B cell (primary cell): ENCODE measurements at regions of chr1 and their contacts with region 1.

Region 1: GRCh38 chr1:48817505-48818114 is 40.9 kb upstream of the BEND5 start:
- DNase-seq: peak; percentile 71
- ATAC-seq: peak; percentile 66
- H3K4me3 ChIP-seq: no peak overlapping the region
- H3K4me3 Mint-ChIP-seq: no peak overlapping the region
- H3K27ac ChIP-seq: no peak overlapping the region
- H3K27ac Mint-ChIP-seq: no peak overlapping the region
- H3K4me1 ChIP-seq: peaks cover 9 to 20% of the 10 kb centered on the region in 2 donors
- H3K4me1 Mint-ChIP-seq: peaks cover 20% of the 10 kb centered on the region
- H3K27me3 ChIP-seq: no peaks in the 10 kb centered on the region
- H3K27me3 Mint-ChIP-seq: no peaks in the 10 kb centered on the region
- CTCF ChIP-seq: peak; percentile 73

Region 2: GRCh38 chr1:48498096-48498791 is 319.4 kb before region 1 on chr1:
- CTCF ChIA-PET with region 1: interaction called, 8 read pairs
- POLR2A ChIA-PET with region 1: no interaction called
- intact Hi-C with region 1: loop called (anchors 1 kb)
- DNase-seq: peak; percentile 68
- ATAC-seq: peak; percentile 62
- H3K4me3 ChIP-seq: no peak overlapping the region
- H3K4me3 Mint-ChIP-seq: no peak overlapping the region
- H3K27ac ChIP-seq: no peak overlapping the region
- H3K27ac Mint-ChIP-seq: no peak overlapping the region
- H3K4me1 ChIP-seq: peaks cover 0 to 5% of the 10 kb centered on the region in 2 donors
- H3K4me1 Mint-ChIP-seq: peaks cover 4% of the 10 kb centered on the region
- H3K27me3 ChIP-seq: no peaks in the 10 kb centered on the region
- H3K27me3 Mint-ChIP-seq: peaks cover 12% of the 10 kb centered on the region
- CTCF ChIP-seq: peak; percentile 93

Region 3: GRCh38 chr1:48629867-48630266 is 187.7 kb before region 1 on chr1:
- CTCF ChIA-PET with region 1: no interaction called
- POLR2A ChIA-PET with region 1: no interaction called
- intact Hi-C with region 1: no loop called
- DNase-seq: no peak
- ATAC-seq: no peak
- H3K4me3 ChIP-seq: no peak overlapping the region
- H3K4me3 Mint-ChIP-seq: no peak overlapping the region
- H3K27ac ChIP-seq: no peak overlapping the region
- H3K27ac Mint-ChIP-seq: no peak overlapping the region
- H3K4me1 ChIP-seq: no peaks in the 10 kb centered on the region
- H3K4me1 Mint-ChIP-seq: no peaks in the 10 kb centered on the region
- H3K27me3 ChIP-seq: peaks cover 0 to 3% (median 0%) of the 10 kb centered on the region in 4 experiments
- H3K27me3 Mint-ChIP-seq: peaks cover 16% of the 10 kb centered on the region
- CTCF ChIP-seq: no peak

Region 4: DNA sequence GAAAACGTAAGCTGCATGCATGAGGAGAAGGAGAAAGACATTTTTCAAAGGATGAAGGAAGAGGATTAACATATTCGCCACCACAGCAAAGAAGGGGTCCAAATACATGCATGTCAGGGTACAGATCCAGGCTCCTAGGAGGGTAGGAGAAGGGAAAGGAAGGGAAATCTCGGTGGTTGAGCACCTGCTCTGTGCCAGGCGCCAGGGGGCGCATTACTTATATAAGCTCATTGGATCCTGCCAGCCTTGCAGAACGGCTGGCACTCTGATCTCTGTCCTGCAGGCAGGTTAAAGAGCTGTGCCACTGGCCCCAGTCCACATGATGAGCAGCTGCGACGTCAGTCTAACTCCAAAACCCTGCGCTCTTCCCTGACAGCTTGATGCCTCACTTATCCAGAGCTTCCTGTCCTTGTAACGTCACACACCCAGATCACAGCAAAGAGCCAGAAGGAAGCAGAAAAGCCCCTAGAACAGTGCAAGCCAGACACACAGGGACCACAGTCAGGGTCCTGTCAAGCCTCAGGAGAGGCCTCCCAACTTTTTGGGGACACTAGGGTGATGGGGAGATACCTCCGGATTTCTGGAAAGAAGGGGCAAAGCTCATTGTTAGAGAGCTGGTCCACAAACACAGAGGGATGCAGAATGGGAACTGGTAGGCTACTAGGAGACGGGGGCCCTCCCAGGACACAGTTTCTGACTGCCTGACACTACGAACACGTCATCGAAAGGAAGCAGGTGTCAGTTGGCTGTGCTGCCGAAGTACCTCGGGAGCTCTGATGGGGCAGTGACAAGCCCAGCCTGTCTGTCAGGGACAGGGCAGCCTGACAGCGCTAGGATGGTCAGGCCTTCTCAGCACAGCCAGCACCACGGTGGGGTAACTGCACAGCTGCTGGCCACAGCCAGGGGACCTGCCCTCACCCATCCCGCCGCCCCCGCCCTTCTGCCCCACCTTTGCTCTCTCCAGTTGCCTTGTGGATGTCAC is 140.0 kb before region 1 on chr1:
- CTCF ChIA-PET with region 1: interaction called, 228 read pairs
- POLR2A ChIA-PET with region 1: no interaction called
- intact Hi-C with region 1: no loop called
- DNase-seq: peak; percentile 67
- ATAC-seq: peak; percentile 49
- H3K4me3 ChIP-seq: no peak overlapping the region
- H3K4me3 Mint-ChIP-seq: peak overlapping the region; percentile 62
- H3K27ac ChIP-seq: no peak overlapping the region
- H3K27ac Mint-ChIP-seq: no peak overlapping the region
- H3K4me1 ChIP-seq: peaks cover 0 to 8% of the 10 kb centered on the region in 2 donors
- H3K4me1 Mint-ChIP-seq: peaks cover 7% of the 10 kb centered on the region
- H3K27me3 ChIP-seq: peaks cover 0 to 2% (median 0%) of the 10 kb centered on the region in 4 experiments
- H3K27me3 Mint-ChIP-seq: peaks cover 23% of the 10 kb centered on the region
- CTCF ChIP-seq: peak; percentile 80

Region 5: GRCh38 chr1:48735796-48736195 is 81.8 kb before region 1 on chr1:
- CTCF ChIA-PET with region 1: interaction called, 17 read pairs
- POLR2A ChIA-PET with region 1: no interaction called
- intact Hi-C with region 1: no loop called
- DNase-seq: no peak
- ATAC-seq: no peak
- H3K4me3 ChIP-seq: no peak overlapping the region
- H3K4me3 Mint-ChIP-seq: no peak overlapping the region
- H3K27ac ChIP-seq: no peak overlapping the region
- H3K27ac Mint-ChIP-seq: no peak overlapping the region
- H3K4me1 ChIP-seq: no peaks in the 10 kb centered on the region
- H3K4me1 Mint-ChIP-seq: peaks cover 3% of the 10 kb centered on the region
- H3K27me3 ChIP-seq: no peaks in the 10 kb centered on the region
- H3K27me3 Mint-ChIP-seq: no peaks in the 10 kb centered on the region
- CTCF ChIP-seq: no peak

Region 6: DNA sequence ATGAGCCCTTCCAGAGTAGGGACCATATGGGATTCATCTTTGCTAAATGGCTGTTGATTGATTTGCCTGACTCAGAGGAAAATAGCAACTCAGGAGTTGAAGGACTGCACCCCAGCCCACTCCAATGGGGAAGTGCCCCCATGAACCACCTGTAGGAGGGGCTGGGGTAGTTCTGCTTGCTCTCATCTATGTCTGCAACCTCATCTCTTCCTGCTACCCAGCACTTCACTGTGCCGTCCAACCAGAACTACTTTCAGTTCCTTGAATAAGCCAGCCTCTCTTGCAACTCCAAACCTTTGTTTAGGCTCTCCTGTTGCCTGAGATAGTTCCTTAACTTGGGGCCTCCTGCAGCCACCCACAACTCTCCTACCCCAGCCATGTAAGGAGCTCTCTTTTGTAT is 67.5 kb before region 1 on chr1:
- CTCF ChIA-PET with region 1: interaction called, 63 read pairs
- POLR2A ChIA-PET with region 1: no interaction called
- intact Hi-C with region 1: loop called (anchors 1 kb)
- DNase-seq: peak; percentile 86
- ATAC-seq: peak; percentile 100
- H3K4me3 ChIP-seq: no peak overlapping the region
- H3K4me3 Mint-ChIP-seq: peak overlapping the region; percentile 7
- H3K27ac ChIP-seq: peak overlapping the region; percentile 36 to 74
- H3K27ac Mint-ChIP-seq: peak overlapping the region; percentile 83
- H3K4me1 ChIP-seq: peaks cover 38 to 41% of the 10 kb centered on the region in 2 donors
- H3K4me1 Mint-ChIP-seq: peaks cover 52% of the 10 kb centered on the region
- H3K27me3 ChIP-seq: no peaks in the 10 kb centered on the region
- H3K27me3 Mint-ChIP-seq: no peaks in the 10 kb centered on the region
- CTCF ChIP-seq: peak; percentile 83

Region 7: GRCh38 chr1:48767975-48768510 is 49.6 kb before region 1 on chr1:
- CTCF ChIA-PET with region 1: interaction called, 41 read pairs
- POLR2A ChIA-PET with region 1: no interaction called
- intact Hi-C with region 1: no loop called
- DNase-seq: peak; percentile 53
- ATAC-seq: peak; percentile 80
- H3K4me3 ChIP-seq: peak overlapping the region in 1 of 5 experiments; percentile 27
- H3K4me3 Mint-ChIP-seq: peak overlapping the region; percentile 66
- H3K27ac ChIP-seq: peak overlapping the region; percentile 42 to 85
- H3K27ac Mint-ChIP-seq: peak overlapping the region; percentile 84
- H3K4me1 ChIP-seq: peaks cover 65 to 72% of the 10 kb centered on the region in 2 donors
- H3K4me1 Mint-ChIP-seq: peaks cover 90% of the 10 kb centered on the region
- H3K27me3 ChIP-seq: no peaks in the 10 kb centered on the region
- H3K27me3 Mint-ChIP-seq: no peaks in the 10 kb centered on the region
- CTCF ChIP-seq: no peak

Region 8: GRCh38 chr1:48793863-48794262 is 23.7 kb before region 1 on chr1:
- CTCF ChIA-PET with region 1: interaction called, 20 read pairs
- POLR2A ChIA-PET with region 1: no interaction called
- intact Hi-C with region 1: loop called (anchors 2 kb)
- DNase-seq: peak; percentile 93
- ATAC-seq: peak; percentile 97
- H3K4me3 ChIP-seq: peak overlapping the region in 4 of 5 experiments; percentile 2 to 47 (median 20)
- H3K4me3 Mint-ChIP-seq: peak overlapping the region; percentile 77
- H3K27ac ChIP-seq: peak overlapping the region; percentile 87 to 96
- H3K27ac Mint-ChIP-seq: peak overlapping the region; percentile 92
- H3K4me1 ChIP-seq: peaks cover 83% of the 10 kb centered on the region in 2 donors
- H3K4me1 Mint-ChIP-seq: peaks cover 84% of the 10 kb centered on the region
- H3K27me3 ChIP-seq: no peaks in the 10 kb centered on the region
- H3K27me3 Mint-ChIP-seq: no peaks in the 10 kb centered on the region
- CTCF ChIP-seq: no peak